ENCODE measurements at regions of chr17 and their contacts with region 1.

Region 1: DNA sequence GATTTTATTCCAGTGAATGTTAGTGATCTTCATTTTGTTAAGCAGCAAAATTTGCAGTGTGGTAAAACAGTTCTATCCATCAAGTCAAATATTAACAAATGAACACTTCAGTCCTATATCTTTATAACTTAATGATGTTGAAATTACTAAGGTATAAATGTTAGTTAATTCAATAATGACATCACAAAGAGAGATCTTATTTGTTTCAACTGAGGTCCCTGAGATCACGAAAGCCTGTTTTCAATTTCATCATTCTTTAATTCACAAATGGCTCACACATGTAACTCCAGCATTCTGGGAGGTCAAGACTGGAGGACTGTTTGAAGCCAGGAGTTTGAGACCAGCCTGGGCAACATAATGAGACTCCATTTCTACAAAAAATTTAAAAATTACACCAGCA is 13.9 kb downstream of the SMURF2 start:
- DNase-seq: no peak
- H3K4me3 ChIP-seq: no peak overlapping the region
- H3K27ac ChIP-seq: no peak overlapping the region
- H3K4me1 ChIP-seq: peaks cover 0 to 18% of the 10 kb centered on the region in 2 donors
- H3K27me3 ChIP-seq: no peaks in the 10 kb centered on the region
- CTCF ChIP-seq: no peak
- POLR2A ChIP-seq: no peak

Region 2: GRCh38 chr17:64420143-64420971 is 227.9 kb before region 1 on chr17:
- intact Hi-C with region 1: loop called (anchors 10 kb)
- DNase-seq: no peak
- H3K4me3 ChIP-seq: no peak overlapping the region
- H3K27ac ChIP-seq: no peak overlapping the region
- H3K4me1 ChIP-seq: no peaks in the 10 kb centered on the region
- H3K27me3 ChIP-seq: no peaks in the 10 kb centered on the region
- CTCF ChIP-seq: peak; percentile 49 to 84 (median 76)
- POLR2A ChIP-seq: no peak

Region 3: DNA sequence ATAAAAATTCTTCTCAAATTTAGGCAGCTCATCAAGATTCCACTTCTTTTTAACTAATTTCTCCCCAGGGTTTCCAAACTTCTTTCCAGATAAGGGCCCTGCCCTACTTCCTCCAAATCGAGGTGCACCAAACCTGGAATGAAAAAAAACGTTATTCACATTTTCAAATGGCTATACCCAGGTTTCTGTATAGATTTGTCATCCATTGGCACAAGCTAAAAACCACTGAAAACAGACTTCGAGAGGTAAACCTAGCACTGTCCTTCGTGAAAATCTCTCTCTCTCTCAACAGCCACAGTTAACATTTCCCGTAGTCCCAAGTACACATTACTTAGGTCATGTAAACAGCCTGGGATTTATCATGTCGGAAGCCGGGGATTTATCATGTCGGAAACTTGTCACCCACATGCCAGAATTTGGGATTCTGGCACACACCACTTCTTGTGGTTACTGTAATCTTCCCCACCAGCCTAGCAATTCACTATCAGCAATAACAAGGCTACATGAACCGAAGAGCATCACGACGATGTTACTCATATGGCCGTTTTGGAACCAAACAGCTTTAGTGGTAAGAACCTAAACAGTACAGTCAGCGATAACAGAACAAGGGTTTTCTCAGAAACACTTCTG is 143.4 kb before region 1 on chr17:
- intact Hi-C with region 1: loop called (anchors 5 kb)
- DNase-seq: no peak
- H3K4me3 ChIP-seq: peak overlapping the region; percentile 94 to 99 (median 97)
- H3K27ac ChIP-seq: peak overlapping the region; percentile 99 to 100 (median 100)
- H3K4me1 ChIP-seq: peaks cover 17 to 56% of the 10 kb centered on the region in 2 donors
- H3K27me3 ChIP-seq: no peaks in the 10 kb centered on the region
- CTCF ChIP-seq: no peak
- POLR2A ChIP-seq: no peak

Region 4: GRCh38 chr17:64694207-64694606 is 46.0 kb after region 1 on chr17:
- intact Hi-C with region 1: no loop called
- DNase-seq: peak; percentile 64 to 79
- H3K4me3 ChIP-seq: no peak overlapping the region
- H3K27ac ChIP-seq: peak overlapping the region in 1 of 3 donors; percentile 1
- H3K4me1 ChIP-seq: peaks cover 0 to 6% of the 10 kb centered on the region in 2 donors
- H3K27me3 ChIP-seq: no peaks in the 10 kb centered on the region
- CTCF ChIP-seq: no peak
- POLR2A ChIP-seq: no peak